Endothelial cell of umbilical vein (primary cell): ENCODE measurements at regions of chr2 and their contacts with region 1.

Region 1: DNA sequence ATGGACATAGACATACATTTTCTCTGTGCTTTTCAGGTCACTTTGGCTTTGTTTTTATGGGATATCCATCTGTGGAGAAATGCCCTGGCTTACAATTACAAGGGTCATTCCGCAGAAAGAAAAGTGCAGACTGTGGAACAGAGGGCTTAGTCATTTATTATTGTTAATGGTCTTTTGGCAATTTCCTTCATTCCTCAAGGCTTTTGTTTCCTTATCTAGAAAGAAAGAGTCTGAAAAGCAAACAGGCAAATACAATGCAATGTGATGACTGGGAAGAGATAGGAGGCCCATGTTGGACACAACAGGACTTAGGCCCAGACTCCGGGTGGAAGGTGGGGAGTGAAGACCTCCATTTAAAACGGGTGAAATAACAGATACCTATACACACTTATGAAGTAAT is 129.5 kb upstream of the CAVIN2 start:
- DNase-seq: peak; percentile 99
- H3K4me3 ChIP-seq: no peak overlapping the region
- H3K27ac ChIP-seq: peak overlapping the region; percentile 86
- H3K4me1 ChIP-seq: peaks cover 44% of the 10 kb centered on the region
- H3K27me3 ChIP-seq: no peaks in the 10 kb centered on the region
- CTCF ChIP-seq: no peak
- POLR2A ChIP-seq: peak; percentile 64

Region 2: DNA sequence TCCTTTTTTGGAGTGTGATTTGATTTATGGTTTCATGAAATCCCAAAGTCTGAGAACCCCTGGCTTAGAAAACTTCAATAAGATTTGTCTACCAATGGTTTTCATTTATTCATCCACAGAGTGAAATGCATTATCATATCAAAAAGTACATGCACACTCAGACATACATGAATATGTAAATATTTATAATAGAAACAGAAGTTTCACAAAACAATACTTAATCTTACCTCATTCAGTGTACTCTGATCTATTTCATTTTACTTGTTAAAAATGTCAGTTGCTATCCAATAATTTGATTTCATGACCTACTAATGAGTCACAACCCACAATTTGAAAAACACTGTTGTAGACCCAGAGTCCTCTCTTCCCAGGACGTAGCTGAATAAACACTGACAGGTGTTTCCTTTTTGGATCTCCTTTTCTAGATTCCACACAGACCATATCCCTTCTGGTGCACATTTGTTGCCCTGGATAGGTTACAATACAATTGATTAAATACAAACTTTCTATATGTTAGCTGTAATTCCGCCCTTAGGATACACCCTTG is 119.1 kb before region 1 on chr2:
- CTCF ChIA-PET with region 1: no interaction called
- POLR2A ChIA-PET with region 1: no interaction called
- dilution Hi-C with region 1: no loop called
- intact Hi-C with region 1: loop called (anchors 1 kb)
- DNase-seq: peak; percentile 97
- H3K4me3 ChIP-seq: no peak overlapping the region
- H3K27ac ChIP-seq: peak overlapping the region; percentile 93
- H3K4me1 ChIP-seq: peaks cover 56% of the 10 kb centered on the region
- H3K27me3 ChIP-seq: no peaks in the 10 kb centered on the region
- CTCF ChIP-seq: no peak
- POLR2A ChIP-seq: peak; percentile 74

Region 3: GRCh38 chr2:191957996-191958860 is 18.2 kb before region 1 on chr2:
- CTCF ChIA-PET with region 1: interaction called, 3 read pairs
- POLR2A ChIA-PET with region 1: no interaction called
- dilution Hi-C with region 1: no loop called
- intact Hi-C with region 1: loop called (anchors 2 kb)
- DNase-seq: peak; percentile 71
- H3K4me3 ChIP-seq: no peak overlapping the region
- H3K27ac ChIP-seq: no peak overlapping the region
- H3K4me1 ChIP-seq: peaks cover 21% of the 10 kb centered on the region
- H3K27me3 ChIP-seq: no peaks in the 10 kb centered on the region
- CTCF ChIP-seq: no peak
- POLR2A ChIP-seq: no peak

Region 4: GRCh38 chr2:192267484-192267883 is 291.0 kb after region 1 on chr2:
- CTCF ChIA-PET with region 1: no interaction called
- POLR2A ChIA-PET with region 1: no interaction called
- dilution Hi-C with region 1: no loop called
- intact Hi-C with region 1: loop called (anchors 10 kb)
- DNase-seq: peak; percentile 85
- H3K4me3 ChIP-seq: no peak overlapping the region
- H3K27ac ChIP-seq: peak overlapping the region; percentile 90
- H3K4me1 ChIP-seq: peaks cover 15% of the 10 kb centered on the region
- H3K27me3 ChIP-seq: no peaks in the 10 kb centered on the region
- CTCF ChIP-seq: no peak
- POLR2A ChIP-seq: no peak